Left cardiac atrium (tissue), 4 donors: ENCODE measurements at regions of chr19 and their contacts with region 1.

Region 1: GRCh38 chr19:12766051-12766521 is 9.3 kb downstream of the HOOK2 start:
- DNase-seq: peak; percentile 84
- ATAC-seq: peak; percentile 77 to 94

Region 2: DNA sequence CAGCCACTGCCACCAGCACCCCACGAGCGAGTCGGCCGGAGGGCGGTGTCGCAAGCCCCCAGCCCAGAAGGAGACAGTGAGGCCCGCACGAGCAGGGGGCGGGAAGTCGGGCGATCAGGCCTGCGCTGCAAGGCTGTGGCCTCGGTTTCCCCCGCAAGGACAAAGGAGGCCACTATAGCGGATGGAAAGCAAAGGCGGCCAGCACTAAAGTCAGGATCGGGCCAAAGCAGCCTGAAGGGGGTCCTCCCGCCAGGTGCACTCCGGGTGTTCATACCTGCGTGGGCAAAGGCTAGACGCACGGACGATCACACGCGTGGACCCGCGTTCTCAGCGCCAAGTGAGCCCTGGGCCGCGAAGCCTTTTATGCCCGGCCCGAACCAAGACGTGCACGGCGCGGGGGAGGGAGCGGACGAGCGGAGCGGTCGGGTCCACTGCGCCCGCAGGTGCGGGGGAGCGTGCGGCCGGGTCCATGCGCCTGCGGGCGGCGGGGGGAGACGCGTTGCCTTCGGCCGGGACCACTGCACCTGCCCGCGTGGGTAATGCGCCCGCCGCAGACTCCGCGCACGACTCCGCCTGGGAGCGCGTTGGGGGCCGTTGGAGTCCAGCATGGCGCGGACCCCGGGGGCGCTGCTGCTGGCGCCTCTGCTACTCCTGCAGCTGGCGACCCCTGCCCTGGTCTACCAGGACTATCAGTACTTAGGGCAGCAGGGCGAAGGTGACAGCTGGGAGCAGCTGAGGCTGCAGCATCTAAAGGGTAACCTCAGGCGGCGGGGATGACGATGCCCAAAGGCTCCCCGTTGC is 35.6 kb after region 1 on chr19 and contains the starts of genes PRDX2 and THSD8:
- intact Hi-C with region 1: loop called (anchors 5 kb)
- DNase-seq: peak; percentile 88
- ATAC-seq: peak; percentile 90
- total RNA-seq, gene PRDX2: 525 to 629 TPM
- total RNA-seq, gene THSD8: 1.8 to 3.2 TPM

Region 3: DNA sequence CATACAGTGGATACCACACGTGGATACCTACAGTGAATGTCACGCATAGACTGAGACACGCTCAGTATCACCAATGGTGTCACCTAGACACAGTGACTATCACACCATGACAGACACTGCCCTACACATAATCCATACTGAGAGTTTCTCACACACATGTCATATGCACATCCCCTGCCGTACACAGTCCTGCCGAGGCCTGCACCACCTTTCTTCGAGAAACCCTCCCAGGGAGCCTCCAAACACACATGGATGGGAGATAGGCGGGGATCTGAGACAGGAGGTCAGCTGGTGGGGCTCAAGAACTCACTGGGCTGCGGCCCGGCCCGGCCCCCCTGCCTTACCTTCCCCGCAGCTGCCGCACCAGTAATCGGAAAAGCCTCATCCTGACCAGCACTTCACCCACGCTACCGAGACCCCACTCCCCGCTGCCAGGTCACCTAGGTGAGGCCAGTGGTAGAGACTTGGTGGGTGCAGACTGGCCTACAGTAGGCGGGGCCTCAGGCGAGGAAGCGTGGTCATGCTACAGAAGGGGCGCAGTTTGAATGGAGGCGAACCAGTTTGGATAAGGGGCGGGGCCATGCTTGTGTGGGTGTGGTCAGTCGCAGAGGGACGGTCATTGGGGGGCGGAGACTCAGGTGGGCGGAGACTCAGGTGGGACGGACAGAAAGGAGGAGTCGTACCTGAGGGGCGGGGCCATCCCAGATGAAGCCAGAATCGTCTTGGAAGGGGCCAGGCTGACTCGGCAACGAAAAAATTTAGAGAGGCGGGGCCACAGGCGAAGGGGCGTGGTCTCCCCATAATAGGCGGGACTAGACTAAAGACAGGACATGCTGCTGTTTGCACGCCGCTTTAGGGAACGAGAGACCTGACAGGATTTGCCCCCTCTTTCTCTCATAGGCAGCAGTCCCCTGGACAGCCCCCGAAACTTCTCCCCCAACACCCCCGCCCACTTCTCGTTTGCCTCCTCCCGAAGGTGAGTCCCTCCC is 74.3 kb after region 1 on chr19:
- intact Hi-C with region 1: loop called in 1 of 2 experiments (anchors 5 kb)
- DNase-seq: peak; percentile 64
- ATAC-seq: peak; percentile 39 to 80

Region 4: GRCh38 chr19:12847159-12848139 is 81.4 kb after region 1 on chr19:
- intact Hi-C with region 1: loop called (anchors 2 to 5 kb)
- DNase-seq: peak; percentile 83
- ATAC-seq: peak; percentile 99

Region 5: DNA sequence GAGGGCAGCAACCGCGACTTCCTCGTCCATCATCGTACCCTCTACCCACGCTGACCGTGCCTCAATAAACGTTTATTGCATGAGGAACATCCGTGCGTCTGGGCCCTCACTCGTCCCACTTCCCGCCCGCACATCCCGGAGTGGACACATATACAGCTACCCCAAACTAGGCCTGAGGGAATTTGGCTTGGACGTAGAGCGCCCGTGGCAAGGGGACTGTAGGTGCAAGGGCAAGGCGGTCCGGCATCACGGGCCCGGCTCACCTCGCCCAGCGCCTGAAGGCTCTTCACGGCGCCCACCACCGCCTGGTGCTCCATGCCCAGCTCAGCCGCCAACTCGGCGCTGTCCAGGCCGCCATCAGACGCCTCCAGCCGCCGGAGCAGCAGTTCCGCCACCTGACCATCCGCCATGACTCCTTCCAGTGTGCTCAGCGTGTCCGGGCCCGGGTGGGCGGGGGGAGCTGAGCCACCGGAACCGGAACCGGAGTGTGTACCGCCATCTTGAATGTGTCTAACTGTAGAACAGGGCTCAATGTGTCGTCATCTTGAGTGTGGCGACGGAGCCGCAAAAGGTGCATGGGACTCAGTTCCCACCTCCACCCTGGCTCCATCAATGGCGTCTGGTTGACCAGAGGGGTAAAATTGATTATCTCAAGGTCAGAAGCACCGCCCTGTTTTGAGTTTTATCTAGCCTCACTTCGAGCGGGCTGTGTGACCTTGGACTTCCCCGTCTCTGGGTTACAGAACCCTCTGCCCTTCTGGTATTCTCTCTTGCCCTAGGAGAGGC is 167.4 kb after region 1 on chr19 and contains the start of gene FARSA:
- intact Hi-C with region 1: no loop called
- DNase-seq: peak; percentile 94
- ATAC-seq: peak; percentile 82 to 85
- total RNA-seq, gene FARSA: 31.8 to 49.1 TPM